Activated CD4-positive, alpha-beta memory T cell treated with anti-CD3 and anti-CD28 coated beads, Interleukin-2, amount 10 ng/mL, durations not matched to agents 7 days and 5 days (primary cell): ENCODE measurements at regions of chr1 and their contacts with region 1.

Region 1: GRCh38 chr1:174022080-174022975 is at the start of gene RC3H1:
- DNase-seq: peak; percentile 92
- H3K4me3 Mint-ChIP-seq: peak within 1 kb of the TSS; percentile 96
- H3K27ac Mint-ChIP-seq: peak within 1 kb of the TSS; percentile 89
- H3K4me1 Mint-ChIP-seq: peaks cover 37% of the 10 kb centered on the region
- H3K27me3 Mint-ChIP-seq: peaks cover 2% of the 10 kb centered on the region
- total RNA-seq, gene RC3H1: 29.6 to 33.6 TPM

Region 2: DNA sequence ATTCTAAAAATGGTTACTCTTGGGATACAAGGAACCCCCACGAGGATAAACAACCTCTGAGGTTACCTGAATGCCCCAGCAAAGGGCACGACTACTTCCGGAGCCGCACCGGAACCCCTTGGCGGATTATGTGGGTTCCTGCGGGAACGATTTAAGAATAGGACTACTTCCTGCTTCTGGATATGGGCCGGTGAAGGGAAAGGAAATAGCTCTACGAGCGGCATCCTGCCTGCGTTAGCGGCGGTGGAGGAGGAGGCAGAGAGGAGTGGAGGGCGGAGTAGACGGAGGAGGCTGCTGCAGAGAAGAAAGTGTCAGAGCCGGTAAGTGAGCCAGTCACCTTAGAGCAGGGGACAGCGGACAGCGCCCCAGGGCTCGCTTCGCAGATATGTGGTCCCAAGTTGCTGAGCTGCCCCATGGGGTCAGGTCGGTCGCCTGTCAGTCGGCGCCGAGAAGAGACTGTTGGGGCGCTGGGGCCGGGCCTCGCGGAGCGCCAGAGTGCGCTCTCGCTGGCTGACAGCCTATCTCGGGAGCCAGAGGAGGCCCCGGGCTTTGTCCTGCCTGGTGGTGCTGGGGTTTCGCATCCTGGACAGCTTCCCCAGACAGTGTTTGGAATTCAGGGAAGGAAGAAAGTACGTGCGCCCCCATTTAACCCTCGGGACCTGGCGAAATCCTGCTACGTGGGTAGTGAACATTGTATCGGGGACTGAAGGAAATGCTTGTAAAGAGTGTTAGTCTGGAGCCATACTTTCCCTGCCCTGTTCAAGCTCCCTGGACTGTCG is 307.4 kb before region 1 on chr1 and contains the start of gene KLHL20:
- CTCF ChIA-PET with region 1: no interaction called
- POLR2A ChIA-PET with region 1: interaction called, 11 read pairs
- DNase-seq: peak; percentile 89
- H3K4me3 Mint-ChIP-seq: peak within 1 kb of the TSS; percentile 90
- H3K27ac Mint-ChIP-seq: peak within 1 kb of the TSS; percentile 97
- H3K4me1 Mint-ChIP-seq: peaks cover 24% of the 10 kb centered on the region
- H3K27me3 Mint-ChIP-seq: peaks cover 21% of the 10 kb centered on the region
- total RNA-seq, gene KLHL20: 17.7 to 18.9 TPM

Region 3: DNA sequence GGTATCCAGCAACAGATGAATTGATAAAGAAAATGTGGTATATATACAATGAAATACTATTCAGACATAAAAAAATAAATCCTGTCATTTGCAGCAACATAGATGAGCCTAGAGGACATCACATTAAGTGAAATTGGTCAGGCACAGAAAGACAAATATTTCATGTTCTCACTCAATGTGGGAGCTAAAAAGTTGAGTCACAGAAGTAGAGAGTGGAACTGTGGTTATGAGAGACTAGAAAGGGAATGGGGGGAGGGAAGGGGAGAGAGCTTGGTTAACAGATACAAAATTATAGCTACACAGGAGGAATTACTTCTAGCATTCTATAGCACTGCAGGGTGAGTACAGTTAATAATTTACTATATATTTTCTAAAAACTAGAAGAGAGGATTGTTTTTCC is 68.1 kb before region 1 on chr1:
- CTCF ChIA-PET with region 1: no interaction called
- POLR2A ChIA-PET with region 1: no interaction called
- DNase-seq: no peak
- H3K4me3 Mint-ChIP-seq: no peak overlapping the region
- H3K27ac Mint-ChIP-seq: no peak overlapping the region
- H3K4me1 Mint-ChIP-seq: peaks cover 17% of the 10 kb centered on the region
- H3K27me3 Mint-ChIP-seq: no peaks in the 10 kb centered on the region

Region 4: GRCh38 chr1:174153085-174153825 is 130.9 kb after region 1 on chr1:
- CTCF ChIA-PET with region 1: no interaction called
- POLR2A ChIA-PET with region 1: interaction called, 11 read pairs
- DNase-seq: no peak
- H3K4me3 Mint-ChIP-seq: no peak overlapping the region
- H3K27ac Mint-ChIP-seq: peak overlapping the region; percentile 69
- H3K4me1 Mint-ChIP-seq: peaks cover 59% of the 10 kb centered on the region
- H3K27me3 Mint-ChIP-seq: no peaks in the 10 kb centered on the region

Region 5: GRCh38 chr1:174204697-174205308 is 182.5 kb after region 1 on chr1:
- CTCF ChIA-PET with region 1: no interaction called
- POLR2A ChIA-PET with region 1: interaction called, 12 read pairs
- DNase-seq: no peak
- H3K4me3 Mint-ChIP-seq: peak overlapping the region; percentile 36
- H3K27ac Mint-ChIP-seq: peak overlapping the region; percentile 76
- H3K4me1 Mint-ChIP-seq: peaks cover 44% of the 10 kb centered on the region
- H3K27me3 Mint-ChIP-seq: no peaks in the 10 kb centered on the region